Mucosa of descending colon (tissue), 3 donors: ENCODE measurements at regions of chr16 and their contacts with region 1.

Region 1: GRCh38 chr16:70685938-70686375 is at the start of gene MTSS2:
- DNase-seq: peak; percentile 65 to 80 (median 73)
- ATAC-seq: peak; percentile 46
- H3K4me3 ChIP-seq: peak within 1 kb of the TSS; percentile 30
- H3K4me1 ChIP-seq: peaks cover 40% of the 10 kb centered on the region
- CTCF ChIP-seq: no peak
- total RNA-seq, gene MTSS2: 11.8 to 151 (median 28.2) TPM

Region 2: DNA sequence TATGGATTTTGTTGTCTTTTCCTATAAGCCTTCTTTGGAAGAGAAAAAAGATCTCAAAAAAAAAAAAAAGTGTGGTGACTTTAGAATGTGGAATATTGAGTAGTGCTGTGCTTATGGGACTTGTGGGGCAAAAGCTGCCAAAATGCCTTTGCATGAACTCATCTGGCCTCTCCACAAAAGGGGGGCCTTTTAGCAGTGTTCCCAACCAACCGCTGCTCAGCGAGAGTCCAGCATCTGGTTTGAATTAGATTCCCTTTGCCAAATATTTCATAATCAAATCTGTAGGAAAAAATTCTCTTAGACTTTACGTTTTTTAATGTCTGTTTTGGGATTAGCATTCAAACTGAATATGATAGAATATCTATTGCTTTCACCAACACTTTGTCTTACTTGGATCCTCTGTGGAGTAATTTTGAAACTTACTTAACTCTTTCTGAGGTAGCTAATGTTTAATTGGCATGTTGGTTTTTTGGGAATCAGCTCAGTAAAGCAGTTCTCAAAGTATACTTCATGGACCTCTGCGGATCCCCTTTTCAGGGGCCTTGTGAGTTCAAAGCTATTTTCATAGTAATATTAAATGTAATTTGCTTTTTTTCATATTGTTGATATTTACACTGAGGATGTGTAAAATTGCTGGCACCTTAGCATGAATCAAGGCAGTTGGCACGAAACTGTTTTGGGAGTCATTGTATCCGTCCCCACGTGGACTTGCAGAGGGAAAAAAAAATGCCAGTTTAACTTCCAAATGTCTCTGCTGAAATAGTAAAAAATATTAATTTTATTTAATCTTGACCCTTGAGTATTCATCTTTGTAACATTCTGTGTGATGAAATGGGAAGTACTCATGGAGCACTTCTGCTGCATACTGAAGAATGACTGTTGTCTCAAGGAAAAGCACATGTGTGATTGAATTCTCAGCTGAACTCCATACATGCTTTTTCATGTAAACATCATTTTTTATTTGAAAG is 1409.5 kb before region 1 on chr16:
- intact Hi-C with region 1: no loop called
- DNase-seq: peak in 1 of 3 donors; percentile 14
- ATAC-seq: peak; percentile 37
- H3K4me3 ChIP-seq: no peak overlapping the region
- H3K4me1 ChIP-seq: no peaks in the 10 kb centered on the region
- CTCF ChIP-seq: no peak

Region 3: GRCh38 chr16:70737377-70738082 is 51.6 kb after region 1 on chr16:
- intact Hi-C with region 1: loop called in 1 of 2 experiments (anchors 10 kb)
- DNase-seq: peak; percentile 52 to 76 (median 67)
- ATAC-seq: peak; percentile 57
- H3K4me3 ChIP-seq: no peak overlapping the region
- H3K4me1 ChIP-seq: peaks cover 14% of the 10 kb centered on the region
- CTCF ChIP-seq: no peak

Region 4: GRCh38 chr16:70770626-70771552 is 84.9 kb after region 1 on chr16:
- intact Hi-C with region 1: loop called in 1 of 2 experiments (anchors 10 kb)
- DNase-seq: peak in 2 of 3 donors; percentile 75 to 77
- ATAC-seq: peak; percentile 91
- H3K4me3 ChIP-seq: no peak overlapping the region
- H3K4me1 ChIP-seq: no peaks in the 10 kb centered on the region
- CTCF ChIP-seq: peak; percentile 86

Region 5: GRCh38 chr16:70789226-70789926 is 103.4 kb after region 1 on chr16:
- intact Hi-C with region 1: no loop called
- DNase-seq: peak in 2 of 3 donors; percentile 43 to 48
- ATAC-seq: no peak
- H3K4me3 ChIP-seq: no peak overlapping the region
- H3K4me1 ChIP-seq: no peaks in the 10 kb centered on the region
- CTCF ChIP-seq: no peak